Ovary (tissue), 10 donors: ENCODE measurements at regions of chr4 and their contacts with region 1.

Region 1: DNA sequence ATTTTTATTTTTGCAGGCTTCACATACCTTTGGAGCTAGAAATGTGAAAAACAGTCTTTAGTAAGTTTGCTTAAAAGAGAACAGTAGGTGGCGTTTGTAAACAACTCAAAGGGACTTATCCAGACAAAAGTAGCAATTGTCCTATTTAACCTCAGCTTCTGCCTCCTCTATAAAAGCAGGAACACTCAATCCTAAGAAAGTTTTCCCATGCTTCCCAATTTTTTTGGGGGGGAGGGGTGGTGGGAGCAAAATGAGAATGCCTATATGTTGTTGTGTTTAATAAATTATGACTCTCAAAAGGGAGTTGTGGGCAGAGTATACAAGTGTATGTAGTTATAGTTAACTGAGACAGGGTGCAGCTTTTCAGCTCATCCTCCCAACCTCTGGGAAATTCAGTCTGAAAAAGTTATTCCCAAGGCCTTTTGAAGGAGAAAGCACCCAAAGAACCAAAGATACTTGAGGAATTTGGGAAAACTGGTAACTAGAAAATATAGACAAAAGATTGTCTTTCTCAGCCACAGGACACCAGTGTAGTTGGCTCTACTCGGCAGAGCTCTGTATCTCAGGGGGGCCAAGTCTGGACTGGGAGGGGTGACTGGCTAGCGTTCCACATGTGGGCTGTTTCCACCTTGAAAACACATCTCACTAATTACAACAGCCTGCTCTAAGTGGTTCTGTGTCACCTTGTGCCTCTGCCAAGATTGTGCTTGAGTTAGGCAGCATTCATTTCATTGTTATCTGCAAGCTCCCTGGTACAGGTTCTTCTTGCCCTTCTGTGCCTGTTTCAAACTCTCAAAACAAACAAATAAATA is 2.8 kb downstream of the SFRP2 start:
- DNase-seq: no peak
- H3K4me3 ChIP-seq: no peak overlapping the region
- H3K27ac ChIP-seq: no peak overlapping the region
- H3K4me1 ChIP-seq: peaks cover 5% of the 10 kb centered on the region
- H3K27me3 ChIP-seq: no peaks in the 10 kb centered on the region
- CTCF ChIP-seq: no peak
- EP300 ChIP-seq: no peak
- POLR2A ChIP-seq: no peak

Region 2: DNA sequence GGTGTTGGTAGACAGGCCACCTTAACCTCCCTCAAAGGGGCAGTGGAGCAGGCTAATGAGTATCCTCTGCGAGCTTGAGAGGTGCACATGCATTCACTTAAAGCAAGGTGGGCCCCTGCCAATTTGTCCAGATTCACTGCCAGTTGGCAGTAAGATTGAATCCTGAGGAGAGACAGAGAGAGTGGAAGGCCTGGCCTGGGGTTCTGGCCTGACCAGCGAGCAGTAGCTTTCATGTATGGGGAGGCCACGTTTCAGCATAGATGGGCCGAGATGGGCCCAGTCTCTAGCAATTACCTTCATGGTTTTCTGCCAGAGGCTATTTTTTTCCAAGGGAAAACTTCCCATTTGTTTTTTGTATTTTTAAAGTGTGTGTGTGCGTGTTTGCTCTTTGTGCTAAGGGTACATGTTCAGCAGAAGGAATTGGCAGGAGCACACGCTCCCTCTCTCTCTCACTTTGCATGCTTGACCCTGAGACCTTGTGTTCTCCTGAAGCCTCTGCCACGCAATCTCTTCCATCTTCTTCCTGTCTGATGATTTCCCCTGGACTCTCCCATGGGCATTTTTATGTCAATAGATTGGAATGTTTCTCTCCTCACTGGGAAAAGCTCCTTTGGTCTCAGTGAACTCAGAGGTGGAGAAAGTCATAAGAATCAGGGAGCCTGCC is 218.5 kb after region 1 on chr4:
- intact Hi-C with region 1: no loop called
- DNase-seq: no peak
- H3K4me3 ChIP-seq: no peak overlapping the region
- H3K27ac ChIP-seq: no peak overlapping the region
- H3K4me1 ChIP-seq: no peaks in the 10 kb centered on the region
- H3K27me3 ChIP-seq: no peaks in the 10 kb centered on the region
- CTCF ChIP-seq: no peak
- EP300 ChIP-seq: no peak
- POLR2A ChIP-seq: no peak

Region 3: GRCh38 chr4:154314248-154314647 is 528.1 kb after region 1 on chr4:
- intact Hi-C with region 1: loop called in 1 of 4 experiments (anchors 10 kb)
- DNase-seq: no peak
- H3K4me3 ChIP-seq: no peak overlapping the region
- H3K27ac ChIP-seq: no peak overlapping the region
- H3K4me1 ChIP-seq: no peaks in the 10 kb centered on the region
- H3K27me3 ChIP-seq: no peaks in the 10 kb centered on the region
- CTCF ChIP-seq: no peak
- EP300 ChIP-seq: no peak
- POLR2A ChIP-seq: no peak